ENCODE measurements at regions of chr6 and their contacts with region 1.

Region 1: DNA sequence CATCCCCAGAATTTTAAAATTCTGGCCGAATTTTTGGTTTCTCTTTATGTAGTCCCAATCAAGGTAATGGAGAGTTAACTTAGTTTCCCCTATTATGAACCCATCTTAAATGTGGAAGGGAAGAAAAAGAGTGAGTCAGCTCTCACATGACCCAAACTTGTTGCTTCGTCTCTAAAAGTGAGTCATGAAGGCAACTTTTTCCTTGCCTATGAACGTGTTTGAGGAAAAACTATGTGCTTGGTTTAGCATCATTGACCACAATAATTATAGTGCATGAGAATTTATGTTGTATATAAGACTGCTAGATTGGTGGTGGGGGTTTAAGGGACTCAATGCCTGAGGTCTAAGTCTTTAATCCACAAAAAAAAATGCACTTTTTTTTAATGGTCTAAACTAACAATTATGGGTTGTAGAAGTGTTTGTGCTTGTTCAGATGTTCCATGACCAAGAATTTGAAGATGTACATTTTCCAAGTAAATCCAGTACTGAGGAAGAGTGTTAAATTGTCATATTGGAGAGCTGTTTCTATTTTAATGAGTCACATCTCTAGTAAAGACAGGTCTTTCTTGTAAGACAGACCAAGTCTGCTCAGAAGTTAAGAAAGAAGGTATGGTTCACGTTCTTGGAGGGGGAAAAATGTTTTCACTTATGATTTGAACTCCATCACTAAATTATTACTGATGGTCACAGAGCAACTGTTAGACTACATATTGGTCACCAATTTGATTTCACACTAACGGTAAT is 409.9 kb upstream of the MARCKS start:
- H3K4me3 ChIP-seq: no peak overlapping the region
- H3K27ac ChIP-seq: no peak overlapping the region
- H3K4me1 ChIP-seq: no peaks in the 10 kb centered on the region
- CTCF ChIP-seq: no peak

Region 2: DNA sequence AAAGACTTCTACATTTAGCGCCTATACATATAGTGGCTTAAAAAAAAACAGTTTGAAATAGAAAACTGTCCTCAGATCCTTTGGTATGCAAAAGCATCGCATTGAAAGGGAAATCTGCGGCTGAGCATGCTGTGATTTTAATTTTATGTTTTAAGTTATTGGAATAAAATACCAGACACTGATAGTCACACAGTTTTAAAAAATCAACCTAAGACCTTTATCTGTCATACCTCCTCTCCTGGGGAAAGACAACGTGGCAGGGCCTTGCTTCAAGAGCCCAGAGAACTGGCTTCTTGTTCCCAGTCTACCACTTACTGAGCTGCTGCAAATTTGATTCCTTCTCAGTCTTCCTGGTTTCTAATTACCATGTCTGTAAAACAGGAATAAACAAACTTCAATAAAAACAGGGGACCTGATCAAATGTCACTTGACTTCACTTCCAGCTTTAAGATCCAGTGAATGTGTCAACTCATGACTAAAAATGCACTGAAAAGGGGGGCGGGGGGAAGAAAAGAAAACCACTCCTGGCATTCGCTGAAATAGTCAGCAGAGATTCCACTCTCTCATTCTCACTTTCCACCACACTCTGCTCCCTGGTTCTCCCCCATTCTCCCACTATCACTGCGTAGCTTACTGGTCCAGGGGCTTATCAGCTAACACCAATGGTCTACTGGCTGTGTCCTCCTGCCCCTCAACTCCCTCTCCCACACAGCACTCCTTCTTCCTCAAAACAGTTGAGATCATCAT is 84.8 kb before region 1 on chr6:
- CTCF ChIA-PET with region 1: no interaction called
- POLR2A ChIA-PET with region 1: interaction called, 13 read pairs
- H3K4me3 ChIP-seq: no peak overlapping the region
- H3K27ac ChIP-seq: no peak overlapping the region; the same call in 1 of the 2 replicates
- H3K4me1 ChIP-seq: peaks cover 17% of the 10 kb centered on the region
- CTCF ChIP-seq: no peak

Measured in HEK293 (cell line).